Posterior cingulate gyrus (tissue), 11 donors: ENCODE measurements at regions of chr7 and their contacts with region 1.

Region 1: DNA sequence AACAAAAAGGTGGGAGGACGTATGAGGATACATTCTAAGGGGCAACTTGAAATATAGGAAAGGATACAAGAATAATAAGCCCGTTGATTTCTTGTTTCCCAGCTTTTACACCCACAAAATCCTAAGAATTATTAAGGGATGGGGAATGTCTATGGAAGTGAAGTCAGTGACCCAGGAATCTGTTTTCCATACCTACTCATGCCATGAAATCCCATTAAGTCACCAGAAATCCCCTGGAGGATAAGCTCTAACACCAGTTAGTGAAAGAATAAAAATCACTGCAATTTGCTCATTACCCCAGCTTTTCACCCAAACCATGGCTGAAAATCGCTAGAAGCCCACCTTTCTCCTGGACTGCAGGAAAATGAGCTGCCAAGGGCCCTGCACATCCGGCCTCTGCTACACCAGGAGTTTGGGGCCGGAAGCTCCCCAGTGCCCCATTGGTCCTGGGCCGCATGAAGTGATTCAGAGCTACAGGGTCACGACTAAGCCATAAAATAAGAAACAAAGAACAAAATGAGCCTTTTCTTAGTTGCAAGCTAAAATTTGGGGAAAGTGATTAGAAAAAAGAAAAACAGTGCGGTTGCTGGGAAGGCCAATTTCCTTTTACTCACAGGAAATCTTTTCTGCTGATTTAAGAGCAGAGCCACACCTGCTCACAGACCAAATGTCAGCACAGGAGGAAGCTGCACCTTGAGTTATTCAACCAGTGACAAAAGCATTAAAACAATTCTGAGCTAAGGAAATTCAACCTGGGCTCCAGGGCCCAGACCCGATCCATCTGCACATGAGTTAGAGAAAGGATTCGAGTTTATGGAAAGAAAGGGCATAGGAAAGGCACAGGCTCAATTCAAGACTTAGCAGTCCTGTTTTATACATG is 40.3 kb downstream of the HIPK2 start:
- DNase-seq: no peak

Region 2: DNA sequence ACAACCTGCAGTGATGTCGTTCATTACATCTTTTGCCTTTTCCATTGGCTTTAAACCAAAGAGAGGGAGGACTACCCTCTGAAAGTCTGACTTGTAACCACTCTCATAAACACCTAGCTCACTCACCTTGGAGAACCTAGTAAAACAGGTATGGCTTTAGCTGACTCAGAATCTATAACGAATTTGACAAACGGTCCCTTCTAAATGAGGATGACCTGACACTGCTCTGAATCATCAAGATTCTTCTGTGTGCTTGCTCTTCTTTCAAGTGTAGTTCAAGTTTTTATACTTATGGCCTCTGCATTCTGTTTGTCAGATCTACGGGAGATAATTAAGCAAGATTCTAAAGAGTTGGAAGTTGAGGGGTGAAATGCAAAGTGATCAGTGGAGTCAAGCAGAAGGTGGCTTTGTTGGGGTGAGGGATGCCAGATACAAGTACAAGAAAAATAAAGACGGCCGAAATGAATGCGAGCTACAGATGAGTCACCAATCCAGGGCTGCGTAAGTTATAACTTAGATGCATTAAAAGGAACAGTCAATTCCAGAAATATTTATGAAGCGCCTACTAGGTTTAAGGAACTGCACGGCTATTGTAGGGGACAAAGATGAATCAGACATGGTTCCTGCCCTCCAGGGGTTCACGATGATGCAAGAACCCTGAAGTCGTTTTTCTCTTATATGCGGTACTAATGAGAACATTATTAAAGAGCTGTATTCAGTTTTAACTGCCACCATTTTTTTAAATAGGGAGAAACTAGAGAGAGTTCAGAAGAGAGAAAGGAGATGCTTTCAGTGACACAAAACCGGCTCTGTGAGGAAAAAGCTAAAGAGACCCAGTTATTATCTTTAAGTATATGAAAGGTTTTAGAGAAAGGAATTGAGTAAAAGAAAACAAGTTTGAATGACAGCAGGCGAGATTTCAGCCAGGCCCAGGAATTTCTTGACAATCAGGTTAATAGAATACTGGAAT is 33.8 kb after region 1 on chr7:
- intact Hi-C with region 1: loop called (anchors 5 kb)
- DNase-seq: no peak

Region 3: DNA sequence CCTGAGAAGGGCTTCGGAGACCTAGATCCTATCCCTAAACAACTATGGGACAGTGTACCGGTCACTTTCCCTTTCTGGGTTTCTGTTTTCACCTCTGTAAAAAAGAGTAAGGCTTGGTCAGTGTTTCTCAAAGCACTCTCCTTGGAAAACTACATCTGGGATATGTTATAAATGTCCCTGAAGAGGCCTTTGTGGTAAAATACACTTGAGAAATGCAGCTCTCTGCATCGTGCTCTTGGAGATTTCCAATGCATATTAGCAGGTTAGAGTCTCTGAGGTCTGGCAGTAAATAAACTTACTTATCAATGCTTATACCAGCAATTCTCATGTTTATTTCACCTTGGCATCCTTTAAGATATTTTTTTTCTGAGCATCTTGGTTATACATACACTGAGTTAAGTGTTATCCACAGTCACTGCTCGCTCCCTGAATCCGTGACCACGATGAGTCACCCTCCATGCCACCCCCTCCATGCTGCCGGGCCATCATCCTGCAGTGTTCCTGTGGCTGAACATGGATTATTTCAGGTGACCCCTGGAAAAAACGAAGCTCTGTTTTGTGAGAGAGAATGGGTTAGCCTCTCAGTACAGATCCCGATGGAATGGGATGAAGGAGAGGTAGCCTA is 88.3 kb after region 1 on chr7:
- intact Hi-C with region 1: no loop called
- DNase-seq: peak in 1 of 10 donors; percentile 75